MCF 10A (cell line): ENCODE measurements at regions of chr3 and their contacts with region 1.

Region 1: DNA sequence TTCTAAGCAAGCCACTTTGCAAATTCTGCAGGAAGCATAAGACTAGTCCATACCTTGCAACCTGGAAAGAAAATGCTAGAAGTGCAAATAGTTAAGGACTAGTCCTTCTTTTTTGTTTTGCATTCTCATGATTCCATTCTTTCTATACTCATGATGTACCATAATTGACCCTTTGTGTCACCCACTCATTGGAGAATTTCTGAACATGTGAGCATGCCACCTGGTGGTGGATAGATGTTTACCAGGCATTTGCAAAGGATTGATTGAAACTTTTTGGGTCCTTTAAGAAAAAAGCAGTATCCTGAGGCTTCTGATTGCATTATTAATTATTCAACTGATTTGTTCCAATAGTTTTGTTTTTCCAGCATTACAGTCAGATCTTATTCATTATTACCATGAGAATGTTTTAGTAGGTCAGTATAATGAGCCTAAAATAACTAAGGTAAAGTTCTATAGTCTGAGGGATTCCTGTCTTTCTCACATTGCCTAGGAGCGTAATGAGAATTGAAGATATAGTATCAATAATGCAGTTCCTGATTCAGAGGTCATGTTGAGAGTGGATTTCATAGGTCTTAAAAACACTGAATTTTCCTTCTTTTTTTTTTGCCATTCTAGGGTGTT is 20.2 kb upstream of the DIPK2A start:
- DNase-seq: peak; percentile 62
- H3K4me3 Mint-ChIP-seq: no peak overlapping the region
- H3K27ac Mint-ChIP-seq: no peak overlapping the region
- H3K4me1 Mint-ChIP-seq: no peaks in the 10 kb centered on the region
- H3K27me3 Mint-ChIP-seq: no peaks in the 10 kb centered on the region
- CTCF ChIP-seq: peak; percentile 56

Region 2: DNA sequence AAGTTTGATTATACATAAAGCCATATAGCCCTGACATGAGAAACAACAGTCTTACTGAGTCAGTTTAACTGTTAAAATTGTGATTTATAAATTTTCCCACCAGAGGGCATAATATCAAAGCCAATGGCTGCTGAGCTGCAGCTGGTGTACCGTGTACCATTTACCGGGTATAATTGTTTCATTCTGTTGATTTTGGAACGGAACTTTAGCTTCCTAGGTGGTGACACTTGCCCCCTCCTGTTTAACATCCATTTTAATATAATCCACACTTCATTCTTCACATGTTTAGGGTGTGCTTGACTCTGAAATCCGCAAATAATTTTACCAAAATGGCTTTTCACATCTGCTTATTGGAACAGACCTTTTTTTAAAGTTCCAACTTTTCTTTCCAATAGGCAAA is 176.0 kb before region 1 on chr3:
- CTCF ChIA-PET with region 1: interaction called, 5 read pairs
- POLR2A ChIA-PET with region 1: no interaction called
- intact Hi-C with region 1: loop called (anchors 1 kb)
- DNase-seq: peak; percentile 45
- H3K4me3 Mint-ChIP-seq: no peak overlapping the region
- H3K27ac Mint-ChIP-seq: no peak overlapping the region
- H3K4me1 Mint-ChIP-seq: peaks cover 5% of the 10 kb centered on the region
- H3K27me3 Mint-ChIP-seq: no peaks in the 10 kb centered on the region
- CTCF ChIP-seq: peak; percentile 57

Region 3: GRCh38 chr3:143795874-143796273 is 155.6 kb before region 1 on chr3:
- CTCF ChIA-PET with region 1: no interaction called
- POLR2A ChIA-PET with region 1: no interaction called
- intact Hi-C with region 1: loop called (anchors 5 kb)
- DNase-seq: no peak
- H3K4me3 Mint-ChIP-seq: no peak overlapping the region
- H3K27ac Mint-ChIP-seq: no peak overlapping the region
- H3K4me1 Mint-ChIP-seq: peaks cover 16% of the 10 kb centered on the region
- H3K27me3 Mint-ChIP-seq: no peaks in the 10 kb centered on the region
- CTCF ChIP-seq: no peak

Region 4: DNA sequence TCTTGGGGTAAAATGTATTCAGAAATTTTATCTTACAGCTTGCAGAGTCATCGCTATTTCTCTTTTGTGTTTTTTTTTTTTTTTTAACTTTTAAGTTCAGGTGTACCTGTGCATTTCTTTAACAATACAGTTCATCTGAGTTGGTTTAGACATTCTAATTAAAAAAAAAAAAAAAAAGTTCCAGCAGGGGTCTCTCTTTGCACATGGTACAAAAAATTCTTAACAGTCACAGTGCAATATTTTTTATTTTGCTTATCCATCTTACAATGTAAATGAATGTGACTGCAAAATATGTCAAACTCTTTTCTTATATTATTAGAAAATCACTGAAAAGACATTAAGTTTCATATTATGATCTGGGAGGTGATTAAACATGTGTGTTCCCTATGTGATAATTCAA is 55.7 kb before region 1 on chr3:
- CTCF ChIA-PET with region 1: interaction called, 26 read pairs
- POLR2A ChIA-PET with region 1: interaction called, 4 read pairs
- intact Hi-C with region 1: loop called (anchors 1 kb)
- DNase-seq: peak; percentile 26
- H3K4me3 Mint-ChIP-seq: no peak overlapping the region
- H3K27ac Mint-ChIP-seq: no peak overlapping the region
- H3K4me1 Mint-ChIP-seq: peaks cover 7% of the 10 kb centered on the region
- H3K27me3 Mint-ChIP-seq: no peaks in the 10 kb centered on the region
- CTCF ChIP-seq: no peak

Region 5: DNA sequence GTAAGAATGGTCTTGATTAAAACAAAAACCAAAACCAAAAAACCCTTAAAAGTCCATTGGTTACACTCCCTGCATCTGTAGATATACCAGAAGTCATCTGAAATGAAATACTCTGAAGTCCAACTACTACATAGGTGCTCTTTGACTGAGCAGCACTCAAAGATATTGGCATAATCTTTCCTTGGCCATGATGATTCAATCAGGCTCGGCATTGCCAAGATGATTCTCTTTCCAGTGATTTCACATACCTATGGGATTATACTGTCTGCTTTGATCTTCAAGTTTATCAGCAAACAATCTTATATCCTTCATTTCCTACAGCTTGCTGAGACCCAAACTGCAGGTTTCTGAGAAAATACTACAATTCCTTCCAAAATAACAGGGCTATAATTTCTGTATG is 15.8 kb before region 1 on chr3:
- CTCF ChIA-PET with region 1: interaction called, 14 read pairs
- POLR2A ChIA-PET with region 1: no interaction called
- intact Hi-C with region 1: no loop called
- DNase-seq: peak; percentile 8
- H3K4me3 Mint-ChIP-seq: no peak overlapping the region
- H3K27ac Mint-ChIP-seq: no peak overlapping the region
- H3K4me1 Mint-ChIP-seq: peaks cover 6% of the 10 kb centered on the region
- H3K27me3 Mint-ChIP-seq: no peaks in the 10 kb centered on the region
- CTCF ChIP-seq: no peak